ENCODE measurements at regions of chr10 and their contacts with region 1.

Region 1: GRCh38 chr10:13787015-13787421 is 200.3 kb downstream of the PRPF18 start:
- DNase-seq: peak; percentile 87
- ATAC-seq: peak; percentile 87
- H3K4me3 Mint-ChIP-seq: peak overlapping the region; percentile 32
- H3K27ac Mint-ChIP-seq: peak overlapping the region; percentile 90
- H3K4me1 Mint-ChIP-seq: peaks cover 22% of the 10 kb centered on the region
- H3K27me3 Mint-ChIP-seq: no peaks in the 10 kb centered on the region

Region 2: DNA sequence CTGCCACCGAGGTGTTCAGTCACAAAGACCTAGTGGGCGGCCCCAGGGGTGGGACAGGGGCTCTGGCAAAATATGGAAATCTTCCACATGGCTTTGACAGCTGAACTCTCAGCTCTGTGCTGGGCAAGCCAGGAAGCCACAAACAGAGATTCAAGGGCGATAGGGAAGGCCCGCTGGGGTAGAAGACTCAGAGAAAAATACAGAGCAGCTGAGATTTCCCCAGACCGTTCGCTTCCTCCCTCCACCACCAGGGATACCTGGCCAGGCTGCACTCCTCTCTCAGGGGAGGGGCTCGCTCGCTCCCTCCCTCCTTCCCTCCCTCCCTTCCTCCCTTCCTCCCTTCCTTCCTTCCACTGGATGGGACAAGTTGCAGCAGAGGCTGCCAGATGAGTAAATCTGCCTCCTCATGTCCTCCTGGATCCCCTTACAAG is 60.2 kb after region 1 on chr10:
- CTCF ChIA-PET with region 1: no interaction called
- POLR2A ChIA-PET with region 1: no interaction called
- intact Hi-C with region 1: no loop called
- DNase-seq: peak; percentile 10
- ATAC-seq: no peak
- H3K4me3 Mint-ChIP-seq: no peak overlapping the region
- H3K27ac Mint-ChIP-seq: no peak overlapping the region
- H3K4me1 Mint-ChIP-seq: peaks cover 14% of the 10 kb centered on the region
- H3K27me3 Mint-ChIP-seq: peaks cover 2% of the 10 kb centered on the region

Region 3: GRCh38 chr10:14009371-14010100 is 222.5 kb after region 1 on chr10:
- CTCF ChIA-PET with region 1: no interaction called
- POLR2A ChIA-PET with region 1: no interaction called
- intact Hi-C with region 1: loop called (anchors 1 to 5 kb)
- DNase-seq: peak; percentile 84
- ATAC-seq: peak; percentile 88
- H3K4me3 Mint-ChIP-seq: peak overlapping the region; percentile 75
- H3K27ac Mint-ChIP-seq: peak overlapping the region; percentile 92
- H3K4me1 Mint-ChIP-seq: peaks cover 41% of the 10 kb centered on the region
- H3K27me3 Mint-ChIP-seq: peaks cover 3% of the 10 kb centered on the region

Region 4: DNA sequence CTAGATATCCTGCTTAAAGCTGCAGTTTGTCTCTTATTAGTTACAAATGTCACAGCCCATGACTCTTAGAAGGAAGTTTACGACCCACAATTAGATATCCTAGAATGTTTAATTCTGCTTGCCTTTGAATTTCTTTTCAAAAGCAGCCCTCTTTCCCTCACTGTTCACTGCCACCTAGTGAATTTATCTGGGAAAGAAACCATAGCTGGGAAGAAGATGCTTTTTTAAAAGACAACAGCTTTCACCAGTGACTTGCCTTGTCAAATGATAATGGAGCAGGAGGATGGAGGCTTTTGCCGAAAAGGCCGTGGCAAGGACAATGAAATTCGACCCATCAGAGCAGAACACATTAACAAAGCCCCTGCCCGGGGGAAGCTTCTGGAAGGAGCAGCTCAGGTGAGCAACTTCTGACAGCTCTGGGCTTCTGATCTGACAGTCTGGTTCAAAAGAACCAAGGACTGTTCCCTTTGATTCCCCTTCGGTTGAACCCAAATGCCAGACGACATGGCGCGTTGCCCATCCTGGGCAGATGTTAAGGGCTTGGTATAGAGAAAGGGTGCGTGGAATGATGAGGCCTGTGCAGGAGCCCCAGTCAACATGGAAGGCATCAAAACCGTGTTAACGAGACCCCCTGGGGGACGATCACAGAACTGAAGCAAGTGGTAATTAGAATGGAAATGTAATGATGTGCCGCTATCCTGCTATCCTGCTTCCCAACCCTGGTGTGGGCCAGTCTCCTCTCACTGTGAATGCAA is 306.9 kb after region 1 on chr10:
- CTCF ChIA-PET with region 1: interaction called, 3 read pairs
- POLR2A ChIA-PET with region 1: no interaction called
- intact Hi-C with region 1: loop called (anchors 5 to 10 kb)
- DNase-seq: no peak
- ATAC-seq: no peak
- H3K4me3 Mint-ChIP-seq: no peak overlapping the region
- H3K27ac Mint-ChIP-seq: no peak overlapping the region
- H3K4me1 Mint-ChIP-seq: no peaks in the 10 kb centered on the region
- H3K27me3 Mint-ChIP-seq: no peaks in the 10 kb centered on the region

Region 5: DNA sequence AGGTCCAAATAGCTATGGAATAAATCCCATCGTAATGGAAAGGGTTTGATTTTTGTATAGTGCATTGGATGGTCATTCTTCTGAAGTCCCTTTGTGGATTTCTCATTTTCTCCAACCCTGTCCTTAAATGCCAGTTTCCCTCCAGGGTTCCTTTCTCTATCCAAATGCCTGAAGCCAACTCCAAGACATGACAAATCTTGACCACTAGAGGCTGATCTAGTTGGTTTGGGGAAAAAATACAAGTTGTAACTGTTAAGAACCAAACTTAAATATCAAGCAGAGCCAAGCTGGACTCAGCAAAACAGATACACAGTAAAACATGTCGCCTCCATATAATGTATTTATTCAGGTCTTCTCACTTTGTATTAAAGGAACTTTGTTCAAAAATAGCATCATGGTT is 515.0 kb after region 1 on chr10:
- CTCF ChIA-PET with region 1: no interaction called
- POLR2A ChIA-PET with region 1: no interaction called
- intact Hi-C with region 1: no loop called
- DNase-seq: no peak
- ATAC-seq: no peak
- H3K4me3 Mint-ChIP-seq: no peak overlapping the region
- H3K27ac Mint-ChIP-seq: no peak overlapping the region
- H3K4me1 Mint-ChIP-seq: no peaks in the 10 kb centered on the region
- H3K27me3 Mint-ChIP-seq: peaks cover 17% of the 10 kb centered on the region

Region 6: GRCh38 chr10:14478604-14479003 is 691.6 kb after region 1 on chr10:
- CTCF ChIA-PET with region 1: no interaction called
- POLR2A ChIA-PET with region 1: no interaction called
- intact Hi-C with region 1: loop called in 1 of 2 experiments (anchors 5 kb)
- DNase-seq: peak; percentile 58
- ATAC-seq: peak; percentile 70
- H3K4me3 Mint-ChIP-seq: no peak overlapping the region
- H3K27ac Mint-ChIP-seq: no peak overlapping the region
- H3K4me1 Mint-ChIP-seq: no peaks in the 10 kb centered on the region
- H3K27me3 Mint-ChIP-seq: peaks cover 8% of the 10 kb centered on the region

Region 7: GRCh38 chr10:14959276-14960057 is 1172.4 kb after region 1 on chr10 and contains the start of gene MEIG1:
- CTCF ChIA-PET with region 1: no interaction called
- POLR2A ChIA-PET with region 1: no interaction called
- intact Hi-C with region 1: loop called in 1 of 2 experiments (anchors 5 kb)
- DNase-seq: peak; percentile 96
- ATAC-seq: peak; percentile 87
- H3K4me3 Mint-ChIP-seq: peak within 1 kb of the TSS; percentile 97
- H3K27ac Mint-ChIP-seq: peak within 1 kb of the TSS; percentile 98
- H3K4me1 Mint-ChIP-seq: peaks cover 26% of the 10 kb centered on the region
- H3K27me3 Mint-ChIP-seq: no peaks in the 10 kb centered on the region
- total RNA-seq, gene MEIG1: 0.81 to 1.1 TPM

Measured in activated CD4-positive, alpha-beta T cell treated with anti-CD3 and anti-CD28 coated beads for 36 hours (primary cell).